PC-3 (cell line): ENCODE measurements at regions of chr1 and their contacts with region 1.

Region 1: GRCh38 chr1:150259758-150260669 is 2.4 kb downstream of the CA14 start:
- DNase-seq: peak; percentile 76
- ATAC-seq: peak; percentile 18
- H3K4me3 ChIP-seq: peak overlapping the region; percentile 29; the same call in 1 of the 2 replicates
- H3K27ac ChIP-seq: 0 out of 2 replicates have a peak overlapping the region, but pooled peaks have one; percentile 0
- H3K4me1 ChIP-seq: peaks cover 55% of the 10 kb centered on the region
- H3K27me3 ChIP-seq: no peaks in the 10 kb centered on the region
- CTCF ChIP-seq: no peak

Region 2: DNA sequence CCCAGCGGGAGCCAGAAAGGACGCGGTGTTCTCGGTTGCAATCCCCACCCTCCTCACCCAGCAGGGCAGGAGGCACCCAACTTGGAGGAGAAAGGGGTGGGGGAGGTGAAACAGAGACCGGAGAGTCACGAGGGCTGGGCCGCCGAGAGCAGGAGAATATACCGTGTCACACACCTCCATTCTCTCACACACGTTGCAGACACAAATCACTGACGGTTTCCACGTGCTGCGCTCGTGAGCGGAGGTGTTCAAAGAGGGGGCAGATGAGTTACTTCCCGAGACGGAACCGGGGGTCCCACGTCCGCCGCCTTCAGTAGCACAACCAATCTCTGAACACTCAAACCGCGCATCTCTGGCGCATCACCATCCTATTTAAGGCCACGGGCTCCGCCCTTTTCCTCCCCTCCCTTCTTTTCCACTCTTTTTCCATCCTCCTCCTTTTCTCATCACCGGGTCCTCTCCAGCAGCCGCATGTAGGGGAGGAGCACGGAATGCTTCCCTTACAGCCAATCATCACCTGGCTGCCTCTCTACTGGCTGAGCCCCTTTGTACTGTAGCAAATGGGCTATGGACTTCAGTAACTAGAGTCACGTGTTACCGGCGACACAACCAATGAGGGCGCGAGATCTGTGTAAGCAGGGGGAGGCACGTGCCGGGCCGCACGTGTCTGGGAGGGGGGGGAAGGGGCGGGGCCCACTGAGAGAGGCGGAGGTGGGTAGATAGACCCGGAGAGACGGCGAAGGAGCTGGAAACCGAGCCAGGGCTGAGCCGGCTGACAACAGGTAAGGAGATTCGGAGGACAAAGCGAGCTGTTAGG is 22.0 kb after region 1 on chr1 and contains the start of gene CIART:
- CTCF ChIA-PET with region 1: interaction called, 28 read pairs
- POLR2A ChIA-PET with region 1: interaction called, 5 read pairs
- intact Hi-C with region 1: loop called (anchors 1 kb)
- DNase-seq: peak; percentile 99
- ATAC-seq: peak; percentile 94
- H3K4me3 ChIP-seq: peak within 1 kb of the TSS; percentile 86
- H3K27ac ChIP-seq: peak within 1 kb of the TSS; percentile 77
- H3K4me1 ChIP-seq: peaks cover 19% of the 10 kb centered on the region
- H3K27me3 ChIP-seq: no peaks in the 10 kb centered on the region
- CTCF ChIP-seq: no peak
- total RNA-seq, gene CIART: 19.0 and 27.0 TPM in 2 replicates

Region 3: DNA sequence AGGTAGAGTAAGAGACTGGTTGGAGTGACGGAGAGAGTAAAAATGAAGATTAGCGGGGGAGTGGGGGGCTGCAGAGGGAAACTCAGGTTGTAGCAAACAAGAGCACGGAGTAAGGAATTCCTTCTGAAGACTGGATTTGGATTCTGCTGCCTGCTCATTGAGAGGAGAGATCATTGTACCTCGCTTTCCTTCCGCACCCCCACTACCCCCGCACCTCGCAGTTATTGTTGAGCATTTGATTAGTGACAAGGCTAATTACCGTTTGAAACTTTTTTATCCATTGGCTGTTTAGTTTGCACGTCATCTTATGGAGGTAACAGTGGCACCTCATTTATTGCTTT is 61.8 kb after region 1 on chr1:
- CTCF ChIA-PET with region 1: no interaction called
- POLR2A ChIA-PET with region 1: no interaction called
- intact Hi-C with region 1: loop called (anchors 1 kb)
- DNase-seq: no peak
- ATAC-seq: no peak
- H3K4me3 ChIP-seq: peak overlapping the region; percentile 85
- H3K27ac ChIP-seq: peak overlapping the region; percentile 80
- H3K4me1 ChIP-seq: peaks cover 7% of the 10 kb centered on the region
- H3K27me3 ChIP-seq: no peaks in the 10 kb centered on the region
- CTCF ChIP-seq: no peak

Region 4: DNA sequence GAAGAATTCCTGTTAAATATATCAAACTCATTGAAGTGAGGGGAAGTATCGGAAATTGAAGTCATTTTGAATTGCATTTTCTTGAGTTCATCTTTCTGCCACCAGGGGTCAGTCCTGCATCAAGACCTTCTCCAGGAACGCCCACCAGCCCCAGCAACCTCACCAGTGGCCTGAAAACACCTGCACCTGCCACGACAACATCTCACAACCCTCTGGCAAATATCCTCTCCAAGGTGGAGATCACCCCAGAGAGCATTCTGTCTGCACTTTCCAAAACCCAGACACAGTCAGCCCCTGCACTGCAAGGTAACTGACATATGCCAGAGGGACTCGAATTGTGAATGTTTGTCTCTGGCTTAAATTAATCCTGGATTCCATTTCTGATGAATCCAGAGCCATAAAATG is 204.4 kb after region 1 on chr1:
- CTCF ChIA-PET with region 1: no interaction called
- POLR2A ChIA-PET with region 1: no interaction called
- intact Hi-C with region 1: loop called (anchors 10 kb)
- DNase-seq: peak; percentile 79
- ATAC-seq: peak; percentile 66
- H3K4me3 ChIP-seq: no peak overlapping the region
- H3K27ac ChIP-seq: no peak overlapping the region
- H3K4me1 ChIP-seq: no peaks in the 10 kb centered on the region
- H3K27me3 ChIP-seq: no peaks in the 10 kb centered on the region
- CTCF ChIP-seq: peak; percentile 83

Region 5: GRCh38 chr1:150537732-150538684 is 278.0 kb after region 1 on chr1:
- CTCF ChIA-PET with region 1: no interaction called
- POLR2A ChIA-PET with region 1: no interaction called
- intact Hi-C with region 1: loop called (anchors 10 kb)
- DNase-seq: no peak
- ATAC-seq: no peak
- H3K4me3 ChIP-seq: no peak overlapping the region
- H3K27ac ChIP-seq: no peak overlapping the region
- H3K4me1 ChIP-seq: no peaks in the 10 kb centered on the region
- H3K27me3 ChIP-seq: no peaks in the 10 kb centered on the region
- CTCF ChIP-seq: peak; percentile 27; the same call in 1 of the 2 replicates